Activated CD4-positive, alpha-beta T cell treated with anti-CD3 and anti-CD28 coated beads, Interleukin-2, amount 10 ng/mL, durations not matched to agents 7 days and 5 days (primary cell): ENCODE measurements at regions of chr2 and their contacts with region 1.

Region 1: GRCh38 chr2:29014811-29015421 is 33.8 kb downstream of the TOGARAM2 start:
- DNase-seq: peak; percentile 81
- H3K4me3 Mint-ChIP-seq: peak overlapping the region; percentile 79
- H3K27ac Mint-ChIP-seq: peak overlapping the region; percentile 97
- H3K4me1 Mint-ChIP-seq: peaks cover 72% of the 10 kb centered on the region
- H3K27me3 Mint-ChIP-seq: no peaks in the 10 kb centered on the region

Region 2: DNA sequence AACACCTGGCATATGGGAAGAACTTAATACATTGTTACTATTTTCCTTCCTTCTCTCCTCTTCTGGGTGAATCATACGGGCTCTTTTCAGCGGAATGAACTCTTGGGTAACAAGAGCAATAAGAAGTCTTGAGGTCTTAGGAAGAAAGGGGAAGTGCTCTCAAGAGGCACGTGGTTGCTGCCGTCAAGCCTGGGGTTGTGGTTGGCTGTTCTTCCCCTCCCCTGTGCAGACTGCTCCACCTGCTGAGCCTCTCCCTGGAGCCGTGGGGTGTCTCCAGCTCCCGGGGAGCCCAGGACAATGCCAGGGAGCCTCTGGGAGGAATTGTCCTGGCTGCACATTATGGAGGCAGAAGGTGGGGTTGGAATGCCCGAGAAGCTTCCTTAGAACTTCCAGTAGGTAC is 14.4 kb before region 1 on chr2:
- CTCF ChIA-PET with region 1: interaction called, 26 read pairs
- POLR2A ChIA-PET with region 1: no interaction called
- DNase-seq: peak; percentile 53
- H3K4me3 Mint-ChIP-seq: no peak overlapping the region
- H3K27ac Mint-ChIP-seq: peak overlapping the region; percentile 71
- H3K4me1 Mint-ChIP-seq: peaks cover 27% of the 10 kb centered on the region
- H3K27me3 Mint-ChIP-seq: no peaks in the 10 kb centered on the region

Region 3: DNA sequence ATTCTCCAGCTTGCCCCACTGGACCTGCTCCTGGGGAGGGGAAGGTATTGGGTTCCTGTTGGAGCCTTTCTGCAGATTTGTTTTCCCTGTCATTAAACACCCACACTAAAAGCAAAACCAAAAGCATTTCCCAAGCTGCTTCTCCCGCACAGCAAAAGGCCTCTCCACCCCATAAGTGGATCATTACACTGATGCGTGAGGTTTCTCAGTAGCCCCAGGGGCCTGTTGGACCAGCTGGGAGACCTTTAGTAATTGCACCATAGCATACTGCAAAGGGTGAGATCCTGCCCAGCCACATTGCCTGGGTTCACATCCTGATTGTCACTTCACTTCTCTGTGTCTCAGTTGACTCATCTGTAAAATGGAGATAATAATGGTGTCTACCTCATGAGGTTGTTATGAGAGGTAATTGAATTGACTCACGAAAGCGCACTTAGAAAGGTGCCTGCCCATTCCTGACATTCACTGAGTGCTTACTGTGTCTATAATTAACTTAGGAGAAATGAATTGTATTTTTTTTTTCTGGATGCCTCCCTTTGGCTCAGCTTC is 10.0 kb after region 1 on chr2:
- CTCF ChIA-PET with region 1: interaction called, 11 read pairs
- POLR2A ChIA-PET with region 1: no interaction called
- DNase-seq: no peak
- H3K4me3 Mint-ChIP-seq: no peak overlapping the region
- H3K27ac Mint-ChIP-seq: no peak overlapping the region
- H3K4me1 Mint-ChIP-seq: peaks cover 6% of the 10 kb centered on the region
- H3K27me3 Mint-ChIP-seq: no peaks in the 10 kb centered on the region